IMR-90 (cell line): ENCODE measurements at regions of chr9 and their contacts with region 1.

Region 1: DNA sequence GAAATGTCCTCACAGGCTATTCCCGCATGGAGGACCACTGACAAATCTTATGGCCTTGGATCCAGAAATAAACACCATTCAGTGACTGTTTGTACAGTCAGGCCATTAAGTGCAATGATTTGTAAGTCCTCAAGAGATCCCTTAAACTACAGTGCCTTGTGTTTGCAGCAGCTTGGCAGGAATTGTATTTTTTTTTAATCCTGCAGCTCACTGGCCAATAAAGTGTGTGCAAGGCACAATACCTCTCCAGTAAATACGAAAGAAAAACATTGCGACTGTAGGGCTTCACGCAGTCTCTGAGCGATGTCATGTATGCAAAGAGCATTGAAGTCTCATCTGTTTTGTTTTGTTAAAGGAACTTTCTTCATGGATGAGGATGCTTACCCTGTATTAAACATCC is 74.2 kb upstream of the TUSC1 start:
- DNase-seq: no peak
- ATAC-seq: no peak
- H3K4me3 ChIP-seq: no peak overlapping the region
- H3K27ac ChIP-seq: no peak overlapping the region
- H3K4me1 ChIP-seq: no peaks in the 10 kb centered on the region
- H3K27me3 ChIP-seq: no peaks in the 10 kb centered on the region
- CTCF ChIP-seq: no peak
- POLR2A ChIP-seq: no peak
- RAD21 ChIP-seq: no peak

Region 2: DNA sequence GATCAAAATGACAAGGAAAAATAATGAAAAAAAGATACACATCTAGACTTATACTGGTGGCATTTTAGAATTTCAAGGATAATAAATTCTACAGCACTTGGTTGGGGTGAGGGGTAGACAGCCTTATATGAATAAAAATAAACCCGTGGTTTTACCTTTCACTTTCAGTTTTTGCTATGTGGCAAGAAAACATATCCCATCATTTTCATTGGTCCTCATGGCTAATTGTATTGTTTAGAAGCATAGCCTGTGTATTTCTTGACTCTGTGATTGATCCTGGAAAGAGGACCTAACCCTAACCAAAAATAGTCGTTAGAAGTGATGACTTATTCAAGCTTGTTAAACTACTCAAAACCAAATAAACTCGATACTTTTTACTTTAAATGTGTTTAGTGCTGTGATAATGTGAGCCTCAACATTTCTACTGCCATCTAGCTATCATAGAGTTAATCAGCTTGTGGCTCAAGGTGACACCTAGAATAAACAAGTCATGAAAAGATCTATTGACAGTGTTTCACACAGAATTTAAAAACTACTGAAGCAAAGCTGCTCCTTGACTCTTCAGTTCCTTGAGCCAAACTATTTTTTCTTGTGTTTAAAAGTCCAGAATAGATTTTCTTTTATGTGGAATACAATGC is 1053.4 kb before region 1 on chr9:
- CTCF ChIA-PET with region 1: no interaction called
- POLR2A ChIA-PET with region 1: no interaction called
- dilution Hi-C with region 1: no loop called
- in situ Hi-C with region 1: no loop called
- intact Hi-C with region 1: no loop called
- DNase-seq: no peak
- ATAC-seq: no peak
- H3K4me3 ChIP-seq: no peak overlapping the region
- H3K27ac ChIP-seq: no peak overlapping the region
- H3K4me1 ChIP-seq: no peaks in the 10 kb centered on the region
- H3K27me3 ChIP-seq: no peaks in the 10 kb centered on the region
- CTCF ChIP-seq: no peak
- POLR2A ChIP-seq: no peak
- RAD21 ChIP-seq: no peak

Region 3: GRCh38 chr9:27460226-27461023 is 1708.0 kb after region 1 on chr9:
- CTCF ChIA-PET with region 1: no interaction called
- POLR2A ChIA-PET with region 1: no interaction called
- dilution Hi-C with region 1: no loop called
- in situ Hi-C with region 1: no loop called
- intact Hi-C with region 1: loop called (anchors 5 kb)
- DNase-seq: no peak
- ATAC-seq: no peak
- H3K4me3 ChIP-seq: no peak overlapping the region
- H3K27ac ChIP-seq: no peak overlapping the region
- H3K4me1 ChIP-seq: no peaks in the 10 kb centered on the region
- H3K27me3 ChIP-seq: no peaks in the 10 kb centered on the region
- CTCF ChIP-seq: no peak
- POLR2A ChIP-seq: no peak
- RAD21 ChIP-seq: no peak